Activated B cell treated with CpG ODN at 0.5 μM for 24 hours (primary cell): ENCODE measurements at regions of chr12 and their contacts with region 1.

Region 1: GRCh38 chr12:93419388-93420034 is 22.2 kb downstream of the UBE2N start:
- DNase-seq: no peak
- ATAC-seq: peak; percentile 56
- H3K4me3 Mint-ChIP-seq: no peak overlapping the region
- H3K27ac Mint-ChIP-seq: peak overlapping the region; percentile 31
- H3K4me1 Mint-ChIP-seq: peaks cover 87% of the 10 kb centered on the region
- H3K27me3 Mint-ChIP-seq: no peaks in the 10 kb centered on the region
- CTCF ChIP-seq: peak; percentile 68

Region 2: DNA sequence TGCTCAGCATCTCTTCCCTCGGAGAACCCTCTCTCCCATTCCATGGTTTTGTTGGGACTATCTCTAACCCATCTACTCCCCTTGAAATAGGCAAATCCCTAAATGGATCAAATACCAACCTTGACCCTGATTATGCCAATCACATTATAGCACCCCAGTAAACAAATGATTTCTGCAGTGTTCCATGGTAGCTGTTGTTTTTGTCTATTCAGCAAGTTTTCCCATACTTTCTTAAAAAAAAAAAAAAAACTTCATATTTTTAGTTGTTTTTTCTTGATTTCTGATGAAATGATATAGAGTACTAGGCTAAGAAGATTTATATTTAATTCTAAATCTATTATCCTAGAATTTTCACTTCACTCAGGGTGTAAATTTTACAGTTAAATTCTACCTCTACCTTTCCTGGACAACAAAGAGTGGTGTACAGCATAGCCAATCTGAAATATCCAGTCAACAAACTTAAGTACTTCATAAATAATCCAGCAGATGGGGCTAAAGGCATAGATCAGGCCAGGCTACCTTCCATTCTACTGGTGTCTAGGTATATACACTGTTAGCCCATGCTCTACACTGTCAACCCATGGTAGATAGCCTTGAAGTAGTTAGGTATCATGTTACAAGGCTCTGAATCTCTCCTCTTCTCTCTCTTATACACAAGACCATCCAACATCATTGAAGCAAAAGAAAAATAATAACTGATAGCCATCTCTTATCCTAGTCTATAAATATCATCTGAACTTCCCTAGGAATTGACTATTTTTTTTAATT is 634.5 kb before region 1 on chr12:
- CTCF ChIA-PET with region 1: interaction called, 16 read pairs
- POLR2A ChIA-PET with region 1: no interaction called
- intact Hi-C with region 1: loop called (anchors 1 kb)
- DNase-seq: no peak
- ATAC-seq: peak; percentile 98
- H3K4me3 Mint-ChIP-seq: no peak overlapping the region
- H3K27ac Mint-ChIP-seq: no peak overlapping the region
- H3K4me1 Mint-ChIP-seq: no peaks in the 10 kb centered on the region
- H3K27me3 Mint-ChIP-seq: no peaks in the 10 kb centered on the region
- CTCF ChIP-seq: no peak

Region 3: DNA sequence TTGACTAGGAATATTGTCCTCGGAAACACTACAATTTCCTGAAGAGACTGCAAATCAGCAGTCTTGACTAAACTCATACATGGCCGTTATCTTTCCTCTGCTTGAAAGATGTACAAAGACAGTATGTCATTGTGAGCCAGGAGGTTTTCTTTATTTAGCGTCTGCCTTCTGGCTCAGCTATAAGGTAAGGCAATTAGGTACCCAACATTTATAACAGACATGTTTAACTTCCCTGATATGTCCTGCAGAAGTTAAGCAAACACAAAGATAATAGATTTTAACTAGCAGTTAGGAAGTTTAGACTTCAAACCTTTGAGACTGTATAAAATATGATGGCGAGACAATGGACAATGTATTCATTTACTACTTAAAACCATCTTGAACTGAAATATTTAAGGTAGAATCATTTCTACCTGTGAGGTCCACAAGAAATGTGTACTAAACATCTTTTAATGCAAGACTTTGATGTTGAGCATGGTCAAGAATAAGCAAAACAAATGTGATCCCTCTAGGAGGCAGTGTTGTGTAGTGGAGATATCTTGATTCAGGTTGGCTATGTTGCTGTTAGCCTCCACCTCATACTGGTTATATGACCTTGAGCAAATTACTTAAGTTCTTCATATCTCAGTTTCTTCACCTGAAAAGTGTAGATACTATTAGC is 394.2 kb before region 1 on chr12:
- CTCF ChIA-PET with region 1: interaction called, 5 read pairs
- POLR2A ChIA-PET with region 1: no interaction called
- intact Hi-C with region 1: loop called (anchors 1 kb)
- DNase-seq: no peak
- ATAC-seq: no peak
- H3K4me3 Mint-ChIP-seq: no peak overlapping the region
- H3K27ac Mint-ChIP-seq: no peak overlapping the region
- H3K4me1 Mint-ChIP-seq: no peaks in the 10 kb centered on the region
- H3K27me3 Mint-ChIP-seq: no peaks in the 10 kb centered on the region
- CTCF ChIP-seq: no peak

Region 4: DNA sequence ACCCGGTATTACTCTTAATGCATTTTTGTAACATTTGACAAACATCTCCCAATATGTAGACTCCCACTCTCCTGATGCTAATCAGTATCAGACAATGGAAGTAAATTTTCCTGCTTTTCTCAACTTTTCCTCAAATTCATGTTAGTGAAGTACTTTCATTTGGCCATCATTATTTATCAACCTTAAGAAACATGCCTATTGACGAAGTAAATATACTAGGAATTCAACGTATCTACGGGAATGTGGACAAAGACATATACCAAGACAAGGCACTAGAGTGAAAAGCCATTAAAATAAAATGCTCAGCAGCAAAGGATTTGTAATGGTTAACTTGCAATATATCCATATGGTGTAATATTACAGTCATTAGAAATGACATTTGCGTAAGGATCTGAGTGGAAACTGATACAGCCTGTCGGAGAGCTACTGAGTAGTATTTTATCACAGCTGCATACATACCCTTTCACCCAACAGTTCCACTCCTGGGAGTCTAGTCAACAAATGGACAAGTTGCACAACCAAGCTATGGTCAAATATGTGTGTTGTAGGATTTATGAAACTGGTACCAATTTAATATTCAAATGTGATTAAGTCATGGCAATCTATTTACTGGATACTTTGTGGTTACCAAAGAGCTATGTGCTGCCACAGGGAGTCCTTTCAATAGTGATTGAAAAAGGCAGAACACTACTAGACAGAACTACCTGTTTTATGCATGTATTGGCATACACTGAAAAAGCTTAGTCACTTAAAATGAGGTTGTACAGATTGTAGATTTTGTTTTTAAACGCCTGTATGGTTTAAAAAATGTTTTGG is 15.3 kb before region 1 on chr12:
- CTCF ChIA-PET with region 1: interaction called, 6 read pairs
- POLR2A ChIA-PET with region 1: no interaction called
- intact Hi-C with region 1: loop called (anchors 2 kb)
- DNase-seq: no peak
- ATAC-seq: no peak
- H3K4me3 Mint-ChIP-seq: no peak overlapping the region
- H3K27ac Mint-ChIP-seq: peak overlapping the region; percentile 13
- H3K4me1 Mint-ChIP-seq: no peaks in the 10 kb centered on the region
- H3K27me3 Mint-ChIP-seq: no peaks in the 10 kb centered on the region
- CTCF ChIP-seq: no peak

Region 5: GRCh38 chr12:93434256-93434865 is 14.8 kb after region 1 on chr12:
- CTCF ChIA-PET with region 1: interaction called, 33 read pairs
- POLR2A ChIA-PET with region 1: interaction called, 10 read pairs
- intact Hi-C with region 1: no loop called
- DNase-seq: no peak
- ATAC-seq: no peak
- H3K4me3 Mint-ChIP-seq: peak overlapping the region; percentile 63
- H3K27ac Mint-ChIP-seq: peak overlapping the region; percentile 65
- H3K4me1 Mint-ChIP-seq: peaks cover 91% of the 10 kb centered on the region
- H3K27me3 Mint-ChIP-seq: no peaks in the 10 kb centered on the region
- CTCF ChIP-seq: no peak

Region 6: GRCh38 chr12:93467351-93468007 is 48.0 kb after region 1 on chr12 and contains the start of gene MRPL42:
- CTCF ChIA-PET with region 1: interaction called, 9 read pairs
- POLR2A ChIA-PET with region 1: interaction called, 4 read pairs
- intact Hi-C with region 1: loop called (anchors 1 kb)
- DNase-seq: peak; percentile 93
- ATAC-seq: peak; percentile 92
- H3K4me3 Mint-ChIP-seq: peak within 1 kb of the TSS; percentile 95
- H3K27ac Mint-ChIP-seq: peak within 1 kb of the TSS; percentile 94
- H3K4me1 Mint-ChIP-seq: peaks cover 23% of the 10 kb centered on the region
- H3K27me3 Mint-ChIP-seq: no peaks in the 10 kb centered on the region
- CTCF ChIP-seq: no peak
- total RNA-seq, gene MRPL42: 40.9 and 44.6 TPM in 2 replicates

Region 7: DNA sequence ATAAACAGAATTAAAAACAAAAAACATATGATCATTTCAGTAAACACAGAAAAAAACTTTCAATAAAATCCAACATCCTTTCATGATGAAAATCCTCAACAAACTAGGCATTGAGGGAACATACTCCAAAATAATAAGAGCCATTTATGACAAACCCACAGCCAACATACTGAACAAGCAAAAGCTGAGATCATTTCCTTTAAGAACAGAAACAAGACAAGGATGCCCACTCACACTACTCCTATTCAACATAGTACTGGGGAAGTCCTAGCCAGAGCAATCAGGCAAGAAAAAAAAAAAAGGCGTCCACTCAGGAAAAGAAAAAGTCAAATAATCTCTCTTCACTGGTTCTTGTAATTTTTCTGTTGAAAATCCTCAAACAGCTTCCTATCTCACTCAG is 77.9 kb after region 1 on chr12:
- CTCF ChIA-PET with region 1: no interaction called
- POLR2A ChIA-PET with region 1: no interaction called
- intact Hi-C with region 1: no loop called
- DNase-seq: no peak
- ATAC-seq: no peak
- H3K4me3 Mint-ChIP-seq: no peak overlapping the region
- H3K27ac Mint-ChIP-seq: no peak overlapping the region
- H3K4me1 Mint-ChIP-seq: no peaks in the 10 kb centered on the region
- H3K27me3 Mint-ChIP-seq: no peaks in the 10 kb centered on the region
- CTCF ChIP-seq: no peak

Region 8: DNA sequence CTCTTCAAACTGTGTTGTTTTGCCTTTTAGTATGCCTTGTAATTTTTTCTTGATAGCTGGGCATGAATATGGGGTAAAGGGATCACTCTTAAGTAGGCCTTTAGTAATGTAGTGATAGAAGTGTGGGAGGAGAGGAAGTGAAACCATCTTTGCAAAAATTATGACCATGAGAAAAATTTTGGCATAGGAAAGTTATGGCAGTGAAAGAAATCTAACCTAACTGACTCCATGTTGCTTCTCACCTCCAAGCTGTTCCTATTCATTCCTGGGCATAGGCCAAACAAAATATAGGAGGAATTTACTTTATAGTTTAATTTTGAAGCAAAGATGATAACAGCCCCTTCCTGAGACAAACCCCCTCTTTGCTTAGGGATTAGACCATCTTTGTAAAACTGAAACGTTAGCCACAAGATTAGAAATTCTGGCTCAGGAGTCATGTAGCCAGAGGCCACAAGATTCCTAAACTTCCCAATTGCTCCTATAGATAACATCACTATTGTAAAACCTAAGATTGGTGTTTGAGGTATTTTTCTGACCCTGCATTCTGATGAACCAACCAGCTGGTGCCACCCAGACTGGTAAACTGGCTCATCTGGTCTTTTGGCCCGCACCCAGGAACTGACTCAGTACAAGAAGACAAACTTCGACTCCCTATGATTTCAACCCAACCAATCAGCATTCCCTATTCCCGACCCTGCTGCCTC is 303.5 kb after region 1 on chr12:
- CTCF ChIA-PET with region 1: no interaction called
- POLR2A ChIA-PET with region 1: no interaction called
- intact Hi-C with region 1: no loop called
- DNase-seq: no peak
- ATAC-seq: no peak
- H3K4me3 Mint-ChIP-seq: no peak overlapping the region
- H3K27ac Mint-ChIP-seq: no peak overlapping the region
- H3K4me1 Mint-ChIP-seq: peaks cover 7% of the 10 kb centered on the region
- H3K27me3 Mint-ChIP-seq: no peaks in the 10 kb centered on the region
- CTCF ChIP-seq: no peak